Psoas muscle (tissue), 8 donors: ENCODE measurements at regions of chr11 and their contacts with region 1.

Region 1: GRCh38 chr11:17921659-17922415 is 91.0 kb downstream of the SERGEF start:
- DNase-seq: peak; percentile 18 to 50
- ATAC-seq: peak; percentile 69 to 96 (median 87)
- H3K4me3 ChIP-seq: no peak overlapping the region
- H3K27ac ChIP-seq: no peak overlapping the region
- H3K4me1 ChIP-seq: peaks cover 22% of the 10 kb centered on the region
- H3K27me3 ChIP-seq: no peaks in the 10 kb centered on the region
- CTCF ChIP-seq: no peak

Region 2: DNA sequence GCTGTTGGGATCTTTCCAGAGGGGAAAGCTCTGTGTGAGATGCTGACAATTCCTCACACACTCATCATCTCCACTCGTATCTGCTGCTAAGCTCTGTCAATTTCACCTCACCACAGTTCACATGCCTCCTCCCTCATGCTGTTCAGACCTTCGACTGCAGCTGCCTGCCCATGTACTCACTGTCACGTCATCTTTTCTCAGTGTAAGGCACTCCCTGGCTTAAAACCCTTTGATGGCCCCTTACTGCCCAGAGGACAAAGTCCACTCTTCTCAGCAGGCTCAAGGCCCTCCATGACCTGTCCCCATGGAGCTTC is 390.1 kb before region 1 on chr11:
- intact Hi-C with region 1: no loop called
- DNase-seq: no peak
- ATAC-seq: no peak
- H3K4me3 ChIP-seq: no peak overlapping the region
- H3K27ac ChIP-seq: no peak overlapping the region
- H3K4me1 ChIP-seq: peaks cover 3% of the 10 kb centered on the region
- H3K27me3 ChIP-seq: no peaks in the 10 kb centered on the region
- CTCF ChIP-seq: no peak

Region 3: GRCh38 chr11:17954395-17955252 is 32.8 kb after region 1 on chr11:
- intact Hi-C with region 1: loop called in 1 of 2 experiments (anchors 5 kb)
- DNase-seq: peak in 1 of 2 donors; percentile 52
- ATAC-seq: peak; percentile 92 to 95 (median 93)
- H3K4me3 ChIP-seq: no peak overlapping the region
- H3K27ac ChIP-seq: peak overlapping the region; percentile 74
- H3K4me1 ChIP-seq: peaks cover 20% of the 10 kb centered on the region
- H3K27me3 ChIP-seq: no peaks in the 10 kb centered on the region
- CTCF ChIP-seq: no peak

Region 4: DNA sequence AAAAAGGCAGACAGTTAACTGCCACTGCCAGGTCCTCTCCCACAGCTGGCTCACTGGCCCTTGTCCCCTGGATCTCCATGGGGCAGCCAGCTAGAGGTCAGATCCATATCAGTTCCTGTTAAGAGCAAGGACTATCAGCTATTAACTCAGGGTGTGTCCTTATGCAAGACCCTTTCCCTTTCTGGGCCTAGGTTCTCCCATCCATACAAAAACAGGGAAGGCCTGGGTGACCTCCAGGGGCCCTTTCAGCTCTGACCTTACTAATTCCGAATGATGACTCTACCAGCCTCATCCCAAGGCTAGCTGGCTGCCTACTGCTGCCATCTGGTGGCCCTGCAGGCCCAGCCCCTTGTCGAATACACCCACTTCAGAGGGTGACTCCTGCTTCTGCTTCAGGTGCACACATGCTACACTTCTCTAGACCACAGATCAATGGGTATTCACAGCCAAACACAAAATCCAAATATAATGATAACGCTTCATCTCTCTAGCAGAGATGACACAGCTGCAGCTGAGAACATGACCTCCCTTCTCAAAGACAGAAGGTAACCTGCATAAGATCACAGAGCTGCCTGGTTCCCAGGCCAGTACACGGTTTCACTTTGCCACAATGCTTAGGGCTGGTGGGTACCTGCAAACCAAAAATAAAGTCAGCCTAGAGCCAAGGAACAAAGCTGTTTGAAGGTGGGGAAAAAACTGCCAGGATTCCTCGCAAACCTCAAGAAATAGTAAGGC is 56.9 kb after region 1 on chr11:
- intact Hi-C with region 1: no loop called
- DNase-seq: peak; percentile 54 to 78
- ATAC-seq: peak; percentile 92 to 97 (median 94)
- H3K4me3 ChIP-seq: no peak overlapping the region
- H3K27ac ChIP-seq: no peak overlapping the region
- H3K4me1 ChIP-seq: peaks cover 5% of the 10 kb centered on the region
- H3K27me3 ChIP-seq: no peaks in the 10 kb centered on the region
- CTCF ChIP-seq: peak; percentile 79

Region 5: DNA sequence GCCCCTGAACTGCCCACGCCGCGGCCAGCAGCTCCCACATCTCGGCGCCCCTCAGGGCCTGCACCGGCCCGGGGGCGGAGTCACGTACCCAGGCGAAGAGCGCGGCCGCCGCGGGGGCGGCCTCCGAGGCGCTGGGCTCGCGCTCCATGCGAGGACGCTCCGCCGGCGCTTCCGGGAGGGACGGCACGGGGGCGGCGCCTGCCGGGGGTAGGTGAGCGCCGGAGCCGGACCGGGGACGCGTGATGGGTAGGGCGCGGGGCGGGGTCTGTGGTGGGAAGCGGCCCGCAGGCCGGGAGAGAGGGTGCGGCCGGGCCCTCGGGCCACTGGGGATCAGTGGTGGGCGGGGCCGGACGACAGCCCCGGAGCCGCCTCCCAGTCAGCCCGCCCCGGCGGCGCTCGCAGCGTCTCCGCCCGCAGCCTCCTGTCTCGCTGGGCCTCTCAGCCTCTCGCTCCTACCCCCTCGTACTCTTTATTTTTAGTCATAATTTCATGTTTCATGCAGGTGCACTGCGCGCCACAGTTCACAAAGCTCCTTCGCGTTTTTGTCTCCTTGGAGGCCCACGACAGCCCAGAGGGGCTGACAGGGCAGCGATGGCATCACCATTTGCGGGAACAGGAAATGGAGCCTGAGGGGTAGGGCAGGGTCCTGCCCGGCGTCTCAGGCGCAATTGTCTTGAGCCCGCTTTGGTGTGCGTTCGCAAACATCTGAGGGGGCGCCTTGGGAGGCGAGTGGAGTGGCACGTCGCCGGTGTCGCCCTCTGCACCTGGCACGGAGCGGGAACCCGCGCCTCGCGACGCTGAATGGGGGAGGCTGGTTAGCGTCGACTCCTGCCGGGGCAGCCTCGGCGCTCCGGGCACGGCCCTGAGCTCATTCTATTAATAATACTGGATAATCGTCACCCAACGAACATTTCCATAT is 91.3 kb after region 1 on chr11 and contains the start of gene SERGEF:
- intact Hi-C with region 1: no loop called
- DNase-seq: peak; percentile 95 to 97
- ATAC-seq: peak; percentile 96 to 98 (median 98)
- H3K4me3 ChIP-seq: peak within 1 kb of the TSS; percentile 96
- H3K27ac ChIP-seq: peak within 1 kb of the TSS; percentile 91
- H3K4me1 ChIP-seq: peaks cover 6% of the 10 kb centered on the region
- H3K27me3 ChIP-seq: no peaks in the 10 kb centered on the region
- CTCF ChIP-seq: no peak
- total RNA-seq, gene SERGEF: 17.9 to 28.3 (median 25.1) TPM